Activated CD8-positive, alpha-beta T cell treated with anti-CD3 and anti-CD28 coated beads, Interleukin-2, amount 10 ng/mL, durations not matched to agents 7 days and 5 days (primary cell): ENCODE measurements at regions of chr12 and their contacts with region 1.

Region 1: DNA sequence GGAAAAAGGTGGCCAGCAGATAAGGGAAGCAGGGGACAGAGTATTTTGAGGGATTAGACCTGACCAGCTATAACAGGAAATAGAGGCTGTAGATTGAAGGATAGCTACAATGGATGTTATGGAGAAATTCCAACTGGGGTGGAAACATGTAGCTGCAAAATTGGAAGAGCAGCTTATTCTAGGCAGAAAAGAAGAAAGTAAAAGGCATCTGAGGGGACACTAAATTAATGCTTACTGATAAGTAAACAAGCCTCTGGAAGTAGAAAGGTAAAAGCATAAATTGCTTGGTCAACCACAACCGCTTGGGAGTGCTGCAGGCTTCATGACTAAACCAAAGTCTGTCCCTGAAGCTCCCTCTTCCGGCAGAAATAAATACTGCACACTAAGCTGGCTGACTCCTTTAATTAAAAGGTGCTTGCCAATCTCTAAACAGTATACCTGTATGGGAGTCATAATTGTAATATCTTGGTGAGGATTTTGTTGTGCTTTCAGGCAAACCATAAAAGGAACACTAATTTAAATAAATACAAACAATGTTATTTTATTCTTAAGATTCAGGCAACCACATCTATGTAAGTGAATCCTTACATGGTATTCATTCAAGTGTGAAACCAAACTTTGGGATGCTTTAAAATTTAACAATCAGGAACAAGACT is 7.7 kb downstream of the UBC start:
- DNase-seq: peak; percentile 96
- ATAC-seq: peak; percentile 59
- H3K4me3 Mint-ChIP-seq: no peak overlapping the region
- H3K27ac Mint-ChIP-seq: peak overlapping the region; percentile 1
- H3K4me1 Mint-ChIP-seq: peaks cover 33% of the 10 kb centered on the region
- H3K27me3 Mint-ChIP-seq: no peaks in the 10 kb centered on the region

Region 2: GRCh38 chr12:124881123-124881522 is 25.6 kb before region 1 on chr12:
- CTCF ChIA-PET with region 1: interaction called, 16 read pairs
- POLR2A ChIA-PET with region 1: no interaction called
- DNase-seq: no peak
- ATAC-seq: peak; percentile 37
- H3K4me3 Mint-ChIP-seq: no peak overlapping the region
- H3K27ac Mint-ChIP-seq: peak overlapping the region; percentile 63
- H3K4me1 Mint-ChIP-seq: peaks cover 12% of the 10 kb centered on the region
- H3K27me3 Mint-ChIP-seq: peaks cover 2% of the 10 kb centered on the region

Region 3: GRCh38 chr12:124895160-124895559 is 11.6 kb before region 1 on chr12:
- CTCF ChIA-PET with region 1: interaction called, 13 read pairs
- POLR2A ChIA-PET with region 1: interaction called, 4 read pairs
- DNase-seq: no peak
- ATAC-seq: no peak
- H3K4me3 Mint-ChIP-seq: no peak overlapping the region
- H3K27ac Mint-ChIP-seq: no peak overlapping the region
- H3K4me1 Mint-ChIP-seq: peaks cover 15% of the 10 kb centered on the region
- H3K27me3 Mint-ChIP-seq: peaks cover under 1% of the 10 kb centered on the region

Region 4: DNA sequence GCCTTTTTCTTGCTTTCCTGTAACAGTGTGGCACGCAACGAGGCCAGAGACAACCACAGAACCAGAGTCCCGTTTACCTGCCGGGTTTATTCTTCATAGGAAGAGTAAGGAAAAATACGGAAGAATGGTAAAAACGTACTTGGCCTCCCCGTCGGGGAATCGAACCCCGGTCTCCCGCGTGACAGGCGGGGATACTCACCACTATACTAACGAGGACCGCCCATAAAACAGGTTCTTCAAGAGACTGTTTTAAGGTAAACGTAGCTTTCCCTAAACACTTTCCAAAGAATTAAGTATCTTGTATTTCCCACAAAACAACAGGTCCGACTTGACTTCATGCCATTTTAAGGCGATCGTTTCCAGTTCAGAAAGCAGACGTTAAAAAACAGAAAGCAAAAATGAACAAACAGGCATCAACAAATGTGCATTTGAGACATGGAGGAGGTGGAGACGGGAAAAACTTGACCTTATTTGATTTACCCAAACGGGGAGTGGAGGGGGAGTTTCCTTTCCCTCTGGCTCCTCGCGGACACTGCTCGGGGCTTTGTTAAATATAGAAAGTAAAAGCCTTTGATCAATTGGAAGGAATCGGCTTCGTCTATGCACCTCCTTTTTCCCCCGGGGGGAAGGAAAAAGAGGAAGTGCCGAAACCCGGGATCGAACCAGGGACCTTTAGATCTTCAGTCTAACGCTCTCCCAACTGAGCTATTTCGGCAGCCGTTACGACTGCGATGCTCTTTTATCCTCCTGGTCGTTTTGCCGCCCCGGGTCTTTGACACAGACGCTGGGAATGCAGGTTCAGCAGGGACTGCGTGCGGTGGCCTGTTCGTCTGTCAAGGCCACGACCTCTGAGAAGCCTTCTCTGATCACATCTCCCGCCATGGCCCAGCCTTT is 20.7 kb after region 1 on chr12:
- CTCF ChIA-PET with region 1: interaction called, 93 read pairs
- POLR2A ChIA-PET with region 1: interaction called, 6 read pairs
- DNase-seq: peak; percentile 95
- ATAC-seq: peak; percentile 88
- H3K4me3 Mint-ChIP-seq: peak overlapping the region; percentile 86
- H3K27ac Mint-ChIP-seq: peak overlapping the region; percentile 93
- H3K4me1 Mint-ChIP-seq: peaks cover 40% of the 10 kb centered on the region
- H3K27me3 Mint-ChIP-seq: peaks cover 4% of the 10 kb centered on the region